ENCODE measurements at regions of chr14 and their contacts with region 1.

Region 1: DNA sequence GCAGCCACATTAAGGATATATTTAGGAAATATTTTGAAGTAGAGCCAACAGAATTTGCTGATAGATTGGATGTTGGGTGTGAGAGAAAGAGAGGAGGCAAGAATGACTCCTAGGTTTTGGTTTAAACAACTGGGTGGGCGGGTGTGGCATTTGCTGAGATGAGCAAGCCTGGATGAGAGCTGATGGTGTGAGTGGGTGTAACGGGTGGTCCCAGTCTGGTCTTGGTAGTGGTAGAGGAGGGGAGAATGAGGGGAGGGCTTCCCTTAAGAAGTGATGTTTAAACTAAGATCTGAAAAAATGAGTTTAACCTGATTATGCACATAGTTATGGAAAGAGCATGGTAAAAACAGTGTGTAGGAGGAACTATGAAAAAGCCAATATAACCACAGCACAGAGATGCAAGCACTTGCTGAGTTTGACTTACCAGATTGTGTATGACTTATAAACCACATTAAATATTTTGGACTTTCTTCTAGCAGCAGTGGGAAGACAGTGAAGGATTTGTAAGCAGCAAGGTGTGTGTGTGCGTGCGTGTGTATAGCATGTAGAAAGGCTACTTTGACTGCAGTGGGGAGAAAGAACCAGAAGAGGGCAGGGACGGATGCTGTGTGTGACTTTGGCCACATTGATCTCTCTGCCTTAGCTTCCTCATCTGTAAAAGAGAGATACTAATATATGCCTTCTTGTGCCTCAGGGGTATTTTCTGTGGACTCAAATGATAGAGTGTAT is 139.7 kb downstream of the PRIMA1 start:
- DNase-seq: peak; percentile 34
- ATAC-seq: peak; percentile 96
- H3K4me3 ChIP-seq: no peak overlapping the region
- H3K27ac ChIP-seq: no peak overlapping the region
- H3K4me1 ChIP-seq: no peaks in the 10 kb centered on the region
- H3K27me3 ChIP-seq: peaks cover 25% of the 10 kb centered on the region
- CTCF ChIP-seq: peak; percentile 42 to 60 (median 44); a peak in 5 of 6 replicates
- POLR2A ChIP-seq: no peak
- RAD21 ChIP-seq: peak; percentile 67

Region 2: DNA sequence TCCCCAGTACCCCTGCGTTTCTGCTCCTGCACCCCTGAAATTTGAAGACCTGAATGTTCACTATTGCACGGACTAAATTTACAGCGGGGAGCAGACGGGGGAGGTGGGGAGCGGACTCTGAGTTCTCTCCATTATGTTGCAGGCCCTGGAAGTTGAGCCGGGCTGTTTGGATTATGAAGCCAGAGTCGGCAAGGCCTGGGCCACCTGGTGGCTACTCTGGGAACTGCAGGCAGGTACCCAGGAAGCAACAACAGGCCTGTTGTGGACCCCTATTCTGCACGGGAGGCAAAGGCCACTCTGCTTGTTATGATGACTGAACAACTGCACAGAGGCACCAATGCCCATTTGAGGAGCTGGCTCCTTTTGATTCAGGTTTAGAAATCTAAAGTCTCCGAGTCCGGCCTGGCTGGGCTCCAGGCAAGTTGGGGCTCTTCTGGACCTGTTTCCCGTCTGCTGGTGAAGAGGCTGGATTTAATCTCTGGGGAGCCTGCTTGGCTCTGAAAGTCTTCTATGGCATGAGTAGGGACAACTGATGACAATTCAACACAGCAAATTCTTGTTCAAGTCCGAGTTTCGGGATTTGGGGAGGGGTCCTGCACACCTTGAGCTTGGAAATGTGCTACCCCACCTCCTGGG is 244.4 kb after region 1 on chr14:
- CTCF ChIA-PET with region 1: no interaction called
- POLR2A ChIA-PET with region 1: no interaction called
- RAD21 ChIA-PET with region 1: no interaction called
- intact Hi-C with region 1: loop called (anchors 1 kb)
- DNase-seq: peak; percentile 35
- ATAC-seq: peak; percentile 86
- H3K4me3 ChIP-seq: no peak overlapping the region
- H3K27ac ChIP-seq: no peak overlapping the region
- H3K4me1 ChIP-seq: peaks cover 2 to 6% of the 10 kb centered on the region in 2 experiments; a peak in 2 of 4 replicates
- H3K27me3 ChIP-seq: no peaks in the 10 kb centered on the region
- CTCF ChIP-seq: peak; percentile 66 to 100 (median 95); a peak in 5 of 6 replicates
- POLR2A ChIP-seq: no peak
- RAD21 ChIP-seq: peak; percentile 72

Region 3: DNA sequence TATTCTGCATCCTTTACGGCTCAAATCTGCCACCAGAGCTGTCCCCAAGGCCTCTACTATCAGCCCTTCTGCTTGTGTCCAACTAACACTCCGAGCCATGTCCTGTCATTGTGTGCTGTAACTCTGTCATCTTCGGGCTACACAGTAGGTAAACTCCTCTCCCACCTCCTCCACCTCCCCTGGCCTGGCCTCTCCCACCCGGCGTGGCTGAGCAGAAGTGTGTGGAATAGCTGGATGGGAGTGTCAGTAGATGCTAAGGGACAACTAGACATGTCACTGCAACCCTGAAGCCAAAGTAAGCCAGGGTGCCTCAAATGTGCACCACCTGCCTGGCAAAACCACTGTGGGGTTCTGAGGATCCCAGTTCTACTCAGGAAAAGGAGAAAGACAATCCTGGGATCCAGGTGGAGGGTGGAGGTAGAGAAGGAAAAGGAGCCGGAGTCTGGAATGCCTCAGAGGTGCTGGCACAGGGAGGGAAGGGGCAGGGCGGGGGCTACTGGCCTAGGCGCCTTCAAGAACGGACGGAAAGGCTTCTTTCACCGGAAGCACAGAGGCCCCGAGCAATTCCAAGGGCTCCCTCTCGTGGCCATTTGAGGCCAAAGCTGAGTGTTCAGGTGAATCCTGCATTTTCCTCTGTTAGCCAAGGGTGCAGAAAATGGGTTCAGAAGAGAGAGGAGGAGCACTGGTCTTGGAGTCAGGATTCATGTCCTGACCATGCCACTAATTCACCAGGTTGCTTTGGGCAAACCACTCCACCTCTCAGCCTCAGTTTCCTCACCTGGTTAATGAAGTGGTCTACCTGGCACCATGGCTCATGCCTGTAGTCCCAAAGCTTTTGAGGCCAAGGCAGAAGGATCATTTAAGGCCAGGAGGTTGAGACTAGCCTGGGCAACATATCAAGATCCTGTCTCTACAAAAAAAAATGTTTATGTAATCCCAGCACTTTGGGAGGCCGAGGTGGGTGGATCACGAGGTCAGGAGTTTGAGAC is 258.0 kb after region 1 on chr14:
- CTCF ChIA-PET with region 1: interaction called, 75 read pairs
- POLR2A ChIA-PET with region 1: no interaction called
- RAD21 ChIA-PET with region 1: interaction called, 4 read pairs
- intact Hi-C with region 1: no loop called
- DNase-seq: peak; percentile 63
- ATAC-seq: peak; percentile 94
- H3K4me3 ChIP-seq: no peak overlapping the region
- H3K27ac ChIP-seq: no peak overlapping the region
- H3K4me1 ChIP-seq: peaks cover 3 to 7% of the 10 kb centered on the region in 2 experiments; a peak in 3 of 4 replicates
- H3K27me3 ChIP-seq: no peaks in the 10 kb centered on the region
- CTCF ChIP-seq: peak; percentile 78 to 92 (median 89)
- POLR2A ChIP-seq: no peak
- RAD21 ChIP-seq: peak; percentile 80

Measured in HCT116 (cell line).